ENCODE measurements at regions of chr20 and their contacts with region 1.

Region 1: GRCh38 chr20:45436732-45437391 is 20.9 kb downstream of the PIGT start:
- DNase-seq: no peak
- ATAC-seq: peak; percentile 97
- H3K4me3 ChIP-seq: peak overlapping the region; percentile 39; the same call in 1 of the 2 replicates
- H3K27ac ChIP-seq: no peak overlapping the region
- H3K4me1 ChIP-seq: peaks cover 16% of the 10 kb centered on the region
- H3K27me3 ChIP-seq: no peaks in the 10 kb centered on the region
- CTCF ChIP-seq: peak; percentile 96 to 97 (median 96)
- EP300 ChIP-seq: no peak
- POLR2A ChIP-seq: no peak
- RAD21 ChIP-seq: peak; percentile 94

Region 2: GRCh38 chr20:45300961-45301360 is 135.9 kb before region 1 on chr20:
- CTCF ChIA-PET with region 1: interaction called, 12 read pairs
- POLR2A ChIA-PET with region 1: no interaction called
- RAD21 ChIA-PET with region 1: interaction called, 7 read pairs
- SMC1A ChIA-PET with region 1: interaction called, 4 read pairs
- in situ Hi-C with region 1: no loop called
- intact Hi-C with region 1: no loop called
- DNase-seq: no peak
- ATAC-seq: peak; percentile 98
- H3K4me3 ChIP-seq: no peak overlapping the region
- H3K27ac ChIP-seq: no peak overlapping the region
- H3K4me1 ChIP-seq: peaks cover 6% of the 10 kb centered on the region; the same call in 1 of the 2 replicates
- H3K27me3 ChIP-seq: no peaks in the 10 kb centered on the region
- CTCF ChIP-seq: peak; percentile 40 to 66 (median 61)
- EP300 ChIP-seq: no peak
- POLR2A ChIP-seq: no peak
- RAD21 ChIP-seq: no peak

Region 3: GRCh38 chr20:45322952-45323383 is 113.9 kb before region 1 on chr20:
- CTCF ChIA-PET with region 1: interaction called, 121 read pairs
- POLR2A ChIA-PET with region 1: interaction called, 4 read pairs
- RAD21 ChIA-PET with region 1: interaction called, 36 read pairs
- SMC1A ChIA-PET with region 1: interaction called, 82 read pairs
- in situ Hi-C with region 1: no loop called
- intact Hi-C with region 1: loop called (anchors 1 kb)
- DNase-seq: no peak
- ATAC-seq: peak; percentile 66
- H3K4me3 ChIP-seq: no peak overlapping the region
- H3K27ac ChIP-seq: no peak overlapping the region
- H3K4me1 ChIP-seq: peaks cover 19% of the 10 kb centered on the region
- H3K27me3 ChIP-seq: no peaks in the 10 kb centered on the region; a peak in 1 of 4 replicates
- CTCF ChIP-seq: peak; percentile 12 to 56 (median 29); a peak in 3 of 6 replicates
- EP300 ChIP-seq: no peak
- POLR2A ChIP-seq: no peak
- RAD21 ChIP-seq: peak; percentile 45; the same call in 1 of the 2 replicates

Region 4: DNA sequence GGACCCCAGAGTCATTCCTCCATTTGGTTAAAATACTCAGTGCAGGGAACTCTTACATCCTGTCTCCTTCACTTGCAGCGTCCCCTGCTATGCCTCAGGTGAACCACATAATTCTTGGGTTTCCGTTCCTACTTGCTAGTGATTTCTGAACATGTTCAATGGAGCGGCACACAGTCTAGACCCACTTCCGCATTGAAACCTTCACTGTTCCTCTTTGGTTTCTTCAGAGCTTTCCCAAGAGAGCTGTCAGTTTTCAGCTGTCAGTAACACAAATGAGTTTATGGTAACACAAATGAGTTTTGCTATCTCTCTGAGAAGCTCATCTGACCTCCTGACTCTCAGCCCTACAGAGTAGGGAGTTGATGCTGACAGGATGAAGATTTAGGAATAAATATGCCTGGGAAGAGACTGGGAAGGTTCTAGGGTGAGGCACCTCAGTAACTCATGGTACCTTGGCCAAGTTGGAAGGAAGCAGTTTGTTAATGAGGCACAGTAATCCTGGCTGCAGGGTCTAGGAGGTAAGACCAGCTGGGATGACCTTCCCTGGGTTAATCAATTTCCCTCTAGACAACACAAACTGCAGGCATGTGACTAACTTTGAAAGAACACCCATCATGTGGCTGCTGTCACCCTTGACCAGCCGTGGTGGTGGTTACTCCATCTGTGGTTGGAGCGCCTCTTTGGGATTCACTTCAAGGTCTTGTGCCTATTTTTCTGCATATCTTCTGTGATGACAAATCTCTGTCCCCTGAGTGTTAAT is 68.5 kb before region 1 on chr20:
- CTCF ChIA-PET with region 1: interaction called, 685 read pairs
- POLR2A ChIA-PET with region 1: interaction called, 12 read pairs
- RAD21 ChIA-PET with region 1: interaction called, 394 read pairs
- SMC1A ChIA-PET with region 1: interaction called, 440 read pairs
- in situ Hi-C with region 1: loop called (anchors 5 kb)
- intact Hi-C with region 1: loop called (anchors 1 kb)
- DNase-seq: peak; percentile 99
- ATAC-seq: peak; percentile 89
- H3K4me3 ChIP-seq: peak overlapping the region; percentile 32; the same call in 1 of the 2 replicates
- H3K27ac ChIP-seq: peak overlapping the region; percentile 64; the same call in 1 of the 2 replicates
- H3K4me1 ChIP-seq: peaks cover 40% of the 10 kb centered on the region
- H3K27me3 ChIP-seq: no peaks in the 10 kb centered on the region
- CTCF ChIP-seq: peak in 1 of 3 experiments; percentile 20; a peak in 2 of 6 replicates
- EP300 ChIP-seq: peak; percentile 96 to 99
- POLR2A ChIP-seq: no peak
- RAD21 ChIP-seq: no peak

Region 5: DNA sequence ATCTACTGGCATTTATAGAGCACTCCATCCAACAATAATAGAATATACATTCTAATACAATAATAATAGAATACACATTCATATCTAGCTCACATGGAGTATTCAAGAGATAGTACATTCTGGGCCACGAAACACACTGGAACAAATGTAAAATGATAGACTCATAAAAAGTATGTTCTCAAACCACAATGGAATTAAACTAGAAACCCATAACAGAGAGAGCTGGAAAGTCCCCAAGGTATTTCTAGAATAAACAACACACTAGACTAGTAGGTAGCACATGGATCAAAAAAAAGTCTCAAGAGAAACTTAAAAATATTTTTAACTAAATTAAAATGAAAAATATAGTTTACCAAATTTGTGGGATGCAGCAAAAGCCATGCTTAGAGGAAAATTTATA is 49.6 kb before region 1 on chr20:
- CTCF ChIA-PET with region 1: interaction called, 16 read pairs
- POLR2A ChIA-PET with region 1: no interaction called
- RAD21 ChIA-PET with region 1: no interaction called
- SMC1A ChIA-PET with region 1: interaction called, 4 read pairs
- in situ Hi-C with region 1: no loop called
- intact Hi-C with region 1: no loop called
- DNase-seq: no peak
- ATAC-seq: no peak
- H3K4me3 ChIP-seq: no peak overlapping the region
- H3K27ac ChIP-seq: no peak overlapping the region
- H3K4me1 ChIP-seq: no peaks in the 10 kb centered on the region
- H3K27me3 ChIP-seq: no peaks in the 10 kb centered on the region
- CTCF ChIP-seq: no peak
- EP300 ChIP-seq: no peak
- POLR2A ChIP-seq: no peak
- RAD21 ChIP-seq: no peak

Region 6: GRCh38 chr20:45415774-45416637 is 20.9 kb before region 1 on chr20 and contains the start of gene PIGT:
- CTCF ChIA-PET with region 1: interaction called, 71 read pairs
- POLR2A ChIA-PET with region 1: no interaction called
- RAD21 ChIA-PET with region 1: interaction called, 20 read pairs
- SMC1A ChIA-PET with region 1: interaction called, 18 read pairs
- in situ Hi-C with region 1: no loop called
- intact Hi-C with region 1: loop called (anchors 2 kb)
- DNase-seq: peak; percentile 51
- ATAC-seq: peak; percentile 83
- H3K4me3 ChIP-seq: peak within 1 kb of the TSS; percentile 97
- H3K27ac ChIP-seq: peak within 1 kb of the TSS; percentile 82
- H3K4me1 ChIP-seq: peaks cover 20% of the 10 kb centered on the region
- H3K27me3 ChIP-seq: no peaks in the 10 kb centered on the region
- CTCF ChIP-seq: no peak
- EP300 ChIP-seq: no peak
- POLR2A ChIP-seq: peak; percentile 99
- RAD21 ChIP-seq: no peak
- polyA plus RNA-seq, gene PIGT: 19.1 to 27.5 TPM